Common myeloid progenitor, CD34-positive (primary cell): ENCODE measurements at regions of chr18 and their contacts with region 1.

Region 1: GRCh38 chr18:63848159-63848558 is 39.3 kb upstream of the SERPINB2 start:
- DNase-seq: peak; percentile 73 to 87 (median 81)
- H3K4me3 ChIP-seq: no peak overlapping the region
- H3K27ac ChIP-seq: no peak overlapping the region
- H3K4me1 ChIP-seq: no peaks in the 10 kb centered on the region
- H3K27me3 ChIP-seq: no peaks in the 10 kb centered on the region

Region 2: GRCh38 chr18:63823518-63824219 is 24.5 kb before region 1 on chr18:
- CTCF ChIA-PET with region 1: interaction called, 17 read pairs
- POLR2A ChIA-PET with region 1: no interaction called
- DNase-seq: peak; percentile 29 to 59 (median 44)
- H3K4me3 ChIP-seq: no peak overlapping the region
- H3K27ac ChIP-seq: no peak overlapping the region
- H3K4me1 ChIP-seq: no peaks in the 10 kb centered on the region
- H3K27me3 ChIP-seq: no peaks in the 10 kb centered on the region

Region 3: GRCh38 chr18:63947051-63947790 is 99.1 kb after region 1 on chr18:
- CTCF ChIA-PET with region 1: no interaction called
- POLR2A ChIA-PET with region 1: no interaction called
- DNase-seq: no peak
- H3K4me3 ChIP-seq: no peak overlapping the region
- H3K27ac ChIP-seq: no peak overlapping the region
- H3K4me1 ChIP-seq: peaks cover 0 to 3% (median 1%) of the 10 kb centered on the region in 4 experiments
- H3K27me3 ChIP-seq: peaks cover 0 to 10% (median 0%) of the 10 kb centered on the region in 5 experiments